GM12878 (cell line): ENCODE measurements at regions of chr2 and their contacts with region 1.

Region 1: DNA sequence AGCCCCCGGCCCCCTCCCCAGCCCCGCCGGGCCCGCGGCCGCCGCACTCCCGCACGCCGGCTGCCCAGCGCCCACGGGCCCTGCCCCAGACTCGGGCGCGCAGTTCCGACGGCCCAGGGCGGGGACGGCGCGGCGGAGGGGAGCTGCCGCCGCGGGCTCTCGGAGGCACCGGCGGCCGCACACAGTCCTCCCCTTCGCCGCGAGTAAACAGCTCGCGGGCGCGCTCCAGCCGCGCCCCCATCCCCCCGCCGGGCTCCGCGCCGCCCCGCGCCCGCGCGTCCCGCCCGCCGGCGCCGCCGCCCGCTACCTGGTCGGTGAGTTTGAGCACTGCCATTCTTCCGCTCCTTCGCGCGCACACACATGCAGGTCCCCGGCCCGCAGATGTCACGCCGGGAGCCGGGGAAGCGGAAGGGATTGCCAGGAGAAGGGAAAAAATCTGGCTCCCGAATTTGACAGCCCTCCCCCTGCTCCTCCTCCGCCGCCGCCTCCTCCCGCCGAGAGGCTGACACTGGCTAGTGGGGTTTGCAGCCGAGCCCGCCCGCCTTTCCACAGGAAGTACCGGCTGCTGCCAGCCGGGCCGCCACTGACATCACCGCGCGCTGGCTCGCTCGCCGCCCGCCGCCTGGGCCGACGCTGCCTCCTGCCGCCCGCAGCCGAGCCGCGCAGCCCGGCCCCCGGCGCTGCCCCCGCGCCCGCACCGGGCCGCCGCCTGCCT is at the start of gene ANKRD44:
- DNase-seq: no peak
- ATAC-seq: peak; percentile 73
- H3K4me3 ChIP-seq: peak within 1 kb of the TSS; percentile 98
- H3K27ac ChIP-seq: peak within 1 kb of the TSS; percentile 99
- H3K4me1 ChIP-seq: peaks cover 21% of the 10 kb centered on the region
- H3K27me3 ChIP-seq: no peaks in the 10 kb centered on the region
- CTCF ChIP-seq: peak; percentile 17 to 64 (median 23); a peak in 3 of 6 replicates
- EP300 ChIP-seq: 0 out of 4 replicates have a peak, but pooled peaks of 1 of the 2 experiments have one; percentile 21
- POLR2A ChIP-seq: peak; percentile 80
- RAD21 ChIP-seq: peak; percentile 55
- polyA plus RNA-seq, gene ANKRD44: 19.1 to 29.1 TPM

Region 2: DNA sequence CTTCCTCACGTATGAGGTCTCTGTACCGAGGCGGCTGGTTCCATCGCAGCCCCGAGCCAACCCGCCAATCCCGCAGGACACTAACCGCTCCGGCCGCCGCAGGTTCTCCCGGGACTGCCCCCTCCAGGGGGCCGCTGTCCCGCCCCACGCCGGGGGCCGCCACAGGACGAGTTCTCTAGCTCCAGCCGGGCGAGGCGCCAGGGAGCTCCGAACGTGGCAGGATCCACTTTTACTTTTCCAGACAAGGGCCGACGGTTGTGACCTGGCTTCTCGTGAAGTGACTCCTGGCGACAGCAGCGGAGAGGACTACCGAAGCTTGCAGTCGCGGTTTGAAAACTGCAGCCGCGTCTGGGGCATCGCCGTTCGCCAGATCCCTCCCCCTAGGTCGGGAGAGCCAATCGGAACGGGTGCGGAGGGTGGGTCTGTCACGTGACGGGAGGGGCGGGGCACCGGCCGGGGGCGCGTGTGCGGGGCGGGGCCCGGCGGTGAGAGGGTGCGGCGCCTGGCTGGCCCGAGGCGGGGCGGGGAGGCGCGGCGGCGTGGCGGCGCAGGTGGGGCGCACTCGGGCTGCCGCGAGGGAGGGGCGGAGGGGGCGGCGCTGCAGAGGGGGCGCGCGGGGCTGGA is 1139.1 kb before region 1 on chr2 and contains the start of gene STK17B:
- CTCF ChIA-PET with region 1: no interaction called
- POLR2A ChIA-PET with region 1: no interaction called
- RAD21 ChIA-PET with region 1: interaction called, 4 read pairs
- SMC1A ChIA-PET with region 1: no interaction called
- in situ Hi-C with region 1: no loop called
- intact Hi-C with region 1: loop called (anchors 10 kb)
- DNase-seq: peak; percentile 82
- ATAC-seq: peak; percentile 64
- H3K4me3 ChIP-seq: peak within 1 kb of the TSS; percentile 98
- H3K27ac ChIP-seq: peak within 1 kb of the TSS; percentile 87
- H3K4me1 ChIP-seq: peaks cover 15% of the 10 kb centered on the region
- H3K27me3 ChIP-seq: no peaks in the 10 kb centered on the region
- CTCF ChIP-seq: no peak
- EP300 ChIP-seq: 0 out of 4 replicates have a peak, but pooled peaks of 1 of the 2 experiments have one; percentile 34
- POLR2A ChIP-seq: peak; percentile 99
- RAD21 ChIP-seq: peak; percentile 16; the same call in 1 of the 2 replicates
- polyA plus RNA-seq, gene STK17B: 21.2 to 28.2 TPM

Region 3: GRCh38 chr2:197152451-197153228 is 157.8 kb before region 1 on chr2:
- CTCF ChIA-PET with region 1: no interaction called
- POLR2A ChIA-PET with region 1: interaction called, 5 read pairs
- RAD21 ChIA-PET with region 1: interaction called, 17 read pairs
- SMC1A ChIA-PET with region 1: interaction called, 3 read pairs
- in situ Hi-C with region 1: no loop called
- intact Hi-C with region 1: no loop called
- DNase-seq: peak; percentile 67
- ATAC-seq: peak; percentile 93
- H3K4me3 ChIP-seq: peak overlapping the region; percentile 25; the same call in 1 of the 2 replicates
- H3K27ac ChIP-seq: peak overlapping the region; percentile 48
- H3K4me1 ChIP-seq: peaks cover 34% of the 10 kb centered on the region
- H3K27me3 ChIP-seq: no peaks in the 10 kb centered on the region
- CTCF ChIP-seq: peak in 2 of 3 experiments; percentile 31 to 39; a peak in 2 of 6 replicates
- EP300 ChIP-seq: peak in 1 of 2 experiments; percentile 44; a peak in 1 of 4 replicates
- POLR2A ChIP-seq: no peak
- RAD21 ChIP-seq: no peak; the same call in 1 of the 2 replicates

Region 4: DNA sequence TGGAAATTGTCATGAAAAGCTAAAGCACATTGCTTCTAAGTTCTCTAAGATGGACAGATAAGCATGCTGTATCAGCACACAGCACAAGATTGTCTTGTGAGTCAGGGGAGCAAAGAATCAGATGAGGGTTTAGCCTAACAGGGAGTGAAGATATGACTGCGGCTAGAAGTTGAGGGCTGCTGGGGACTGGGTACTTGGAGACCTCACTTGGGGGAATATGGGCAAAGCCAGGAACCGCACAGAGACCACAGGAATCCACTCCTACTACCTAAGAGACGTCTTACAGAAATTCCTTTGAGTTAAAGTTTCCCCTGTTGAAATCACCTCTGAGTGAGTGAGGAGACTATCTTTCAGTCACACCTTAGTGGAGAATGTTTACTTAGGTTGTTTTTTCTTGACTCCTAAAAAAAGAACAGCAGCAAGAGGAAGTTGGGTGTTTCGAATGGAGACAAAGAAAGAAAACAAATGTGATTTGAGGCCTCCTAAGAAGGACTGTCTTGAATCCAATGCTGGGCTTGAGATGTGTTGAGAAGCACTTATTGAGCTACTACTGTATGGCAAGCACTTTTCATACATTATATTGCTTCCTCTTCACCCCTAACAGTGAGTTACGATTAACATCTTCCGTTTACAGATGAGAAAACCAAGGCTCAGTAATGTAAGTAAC is 100.6 kb before region 1 on chr2:
- CTCF ChIA-PET with region 1: interaction called, 34 read pairs
- POLR2A ChIA-PET with region 1: interaction called, 80 read pairs
- RAD21 ChIA-PET with region 1: interaction called, 408 read pairs
- SMC1A ChIA-PET with region 1: interaction called, 433 read pairs
- in situ Hi-C with region 1: no loop called
- intact Hi-C with region 1: no loop called
- DNase-seq: peak; percentile 76
- ATAC-seq: peak; percentile 47
- H3K4me3 ChIP-seq: peak overlapping the region; percentile 28
- H3K27ac ChIP-seq: peak overlapping the region; percentile 97
- H3K4me1 ChIP-seq: peaks cover 94% of the 10 kb centered on the region
- H3K27me3 ChIP-seq: no peaks in the 10 kb centered on the region
- CTCF ChIP-seq: no peak
- EP300 ChIP-seq: peak in 1 of 2 experiments; percentile 21; a peak in 2 of 4 replicates
- POLR2A ChIP-seq: no peak
- RAD21 ChIP-seq: no peak

Region 5: DNA sequence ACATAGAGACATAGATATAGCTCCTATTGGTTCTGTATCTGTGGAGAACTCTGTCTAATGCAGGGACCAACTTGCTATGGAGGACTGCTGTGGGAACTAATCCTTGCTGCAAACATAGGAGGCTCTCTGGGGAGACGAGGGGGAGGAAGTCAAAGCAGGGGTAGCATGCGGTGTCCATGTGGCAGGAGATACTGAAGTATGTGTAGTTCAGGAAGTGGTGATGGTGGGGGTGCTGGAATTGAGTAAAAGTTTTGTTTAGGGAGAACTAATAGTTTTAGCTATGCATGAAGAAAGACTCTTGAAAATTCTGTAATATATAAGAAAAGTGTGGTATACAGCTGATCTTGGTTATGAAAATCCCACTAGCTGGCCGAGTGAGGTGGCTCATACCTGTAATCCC is 61.8 kb before region 1 on chr2:
- CTCF ChIA-PET with region 1: interaction called, 3 read pairs
- POLR2A ChIA-PET with region 1: interaction called, 5 read pairs
- RAD21 ChIA-PET with region 1: interaction called, 43 read pairs
- SMC1A ChIA-PET with region 1: interaction called, 165 read pairs
- in situ Hi-C with region 1: no loop called
- intact Hi-C with region 1: no loop called
- DNase-seq: no peak
- ATAC-seq: peak; percentile 45
- H3K4me3 ChIP-seq: no peak overlapping the region
- H3K27ac ChIP-seq: peak overlapping the region; percentile 76
- H3K4me1 ChIP-seq: peaks cover 19% of the 10 kb centered on the region
- H3K27me3 ChIP-seq: no peaks in the 10 kb centered on the region
- CTCF ChIP-seq: no peak
- EP300 ChIP-seq: no peak
- POLR2A ChIP-seq: no peak
- RAD21 ChIP-seq: no peak

Region 6: GRCh38 chr2:197279997-197280746 is 30.3 kb before region 1 on chr2:
- CTCF ChIA-PET with region 1: interaction called, 10 read pairs
- POLR2A ChIA-PET with region 1: interaction called, 10 read pairs
- RAD21 ChIA-PET with region 1: interaction called, 6 read pairs
- SMC1A ChIA-PET with region 1: interaction called, 14 read pairs
- in situ Hi-C with region 1: no loop called
- intact Hi-C with region 1: no loop called
- DNase-seq: no peak
- ATAC-seq: peak; percentile 82
- H3K4me3 ChIP-seq: peak overlapping the region; percentile 33; the same call in 1 of the 2 replicates
- H3K27ac ChIP-seq: peak overlapping the region; percentile 36
- H3K4me1 ChIP-seq: peaks cover 11% of the 10 kb centered on the region
- H3K27me3 ChIP-seq: no peaks in the 10 kb centered on the region
- CTCF ChIP-seq: no peak
- EP300 ChIP-seq: 0 out of 4 replicates have a peak, but pooled peaks of 1 of the 2 experiments have one; percentile 12
- POLR2A ChIP-seq: no peak
- RAD21 ChIP-seq: no peak

Region 7: GRCh38 chr2:197322724-197323720 is 12.6 kb after region 1 on chr2:
- CTCF ChIA-PET with region 1: interaction called, 9 read pairs
- POLR2A ChIA-PET with region 1: interaction called, 3 read pairs
- RAD21 ChIA-PET with region 1: interaction called, 20 read pairs
- SMC1A ChIA-PET with region 1: interaction called, 6 read pairs
- in situ Hi-C with region 1: no loop called
- intact Hi-C with region 1: no loop called
- DNase-seq: no peak
- ATAC-seq: peak; percentile 52
- H3K4me3 ChIP-seq: peak overlapping the region; percentile 32; the same call in 1 of the 2 replicates
- H3K27ac ChIP-seq: 0 out of 2 replicates have a peak overlapping the region, but pooled peaks have one; percentile 7
- H3K4me1 ChIP-seq: peaks cover 18% of the 10 kb centered on the region; the same call in 1 of the 2 replicates
- H3K27me3 ChIP-seq: no peaks in the 10 kb centered on the region
- CTCF ChIP-seq: no peak
- EP300 ChIP-seq: no peak
- POLR2A ChIP-seq: peak; percentile 51
- RAD21 ChIP-seq: no peak

Region 8: DNA sequence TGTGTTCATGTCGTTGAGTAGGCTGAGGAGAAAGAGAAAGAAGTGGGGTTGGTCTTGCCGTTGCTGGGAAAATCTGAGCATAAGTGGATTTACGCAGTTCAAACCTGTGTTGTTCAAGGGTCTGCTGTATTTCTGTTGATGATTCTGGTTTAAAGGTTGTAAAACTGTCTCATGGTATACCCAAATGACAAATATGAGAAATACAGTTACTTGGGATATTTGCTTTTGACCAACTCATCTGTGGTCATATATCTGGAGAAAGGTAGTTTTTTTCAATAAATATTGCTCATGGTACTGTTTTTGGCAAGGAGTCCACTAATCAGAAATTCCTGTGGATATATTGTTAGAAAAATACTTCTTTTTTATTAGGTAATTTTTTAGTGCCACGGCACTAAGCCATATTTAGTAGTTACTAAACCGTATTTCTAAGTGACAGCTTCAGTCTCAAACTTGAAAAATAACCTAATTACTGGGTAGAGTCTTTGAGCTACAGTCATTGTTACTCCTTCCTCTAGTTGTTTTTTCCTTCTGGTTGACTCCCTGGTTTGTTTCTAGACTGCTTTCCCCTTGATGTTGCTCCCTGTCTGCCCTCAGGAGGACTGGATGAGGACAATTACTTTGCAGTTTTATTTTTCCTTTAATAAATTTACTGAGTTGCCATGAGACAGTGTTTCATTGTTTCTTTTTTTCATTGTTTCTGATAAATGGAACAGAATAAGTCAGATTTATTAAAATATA is 236.9 kb after region 1 on chr2:
- CTCF ChIA-PET with region 1: no interaction called
- POLR2A ChIA-PET with region 1: no interaction called
- RAD21 ChIA-PET with region 1: no interaction called
- SMC1A ChIA-PET with region 1: no interaction called
- in situ Hi-C with region 1: no loop called
- intact Hi-C with region 1: no loop called
- DNase-seq: no peak
- ATAC-seq: no peak
- H3K4me3 ChIP-seq: no peak overlapping the region
- H3K27ac ChIP-seq: no peak overlapping the region
- H3K4me1 ChIP-seq: no peaks in the 10 kb centered on the region
- H3K27me3 ChIP-seq: no peaks in the 10 kb centered on the region
- CTCF ChIP-seq: no peak
- EP300 ChIP-seq: no peak
- POLR2A ChIP-seq: no peak
- RAD21 ChIP-seq: no peak

Region 9: DNA sequence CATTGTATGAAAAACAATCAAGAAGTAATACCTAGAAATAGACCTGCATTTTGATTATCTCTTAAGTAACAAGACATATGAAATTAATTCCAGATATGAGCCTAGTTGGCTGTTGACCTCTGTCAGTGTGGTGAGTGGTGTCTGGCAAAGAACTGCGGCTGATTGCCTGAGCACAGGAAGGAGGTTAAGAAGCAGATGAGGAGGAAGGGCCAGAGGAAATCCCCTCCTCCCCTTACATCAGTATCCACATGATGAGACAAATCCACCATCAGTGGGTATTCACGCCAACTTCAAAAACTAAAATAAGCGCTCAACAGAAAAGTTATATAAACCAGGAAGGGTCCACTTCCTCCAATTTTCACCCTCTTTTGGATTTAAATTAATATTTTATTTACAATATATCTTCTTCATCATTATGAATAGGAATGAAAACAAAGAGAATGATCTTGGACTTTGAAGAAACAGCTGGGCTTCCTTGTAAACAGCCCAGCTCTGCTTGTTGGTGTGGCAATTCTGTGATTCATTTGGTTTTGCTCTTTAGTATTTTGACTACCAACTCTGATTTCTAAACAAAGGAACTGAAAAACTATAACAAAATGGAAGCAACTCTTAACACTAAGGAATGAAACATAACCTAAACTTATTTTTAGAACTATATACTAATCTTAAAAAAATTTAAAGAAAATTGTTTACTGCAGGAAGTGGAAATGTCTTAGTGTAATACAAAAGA is 337.7 kb after region 1 on chr2:
- CTCF ChIA-PET with region 1: no interaction called
- POLR2A ChIA-PET with region 1: no interaction called
- RAD21 ChIA-PET with region 1: no interaction called
- SMC1A ChIA-PET with region 1: no interaction called
- in situ Hi-C with region 1: no loop called
- intact Hi-C with region 1: no loop called
- DNase-seq: no peak
- ATAC-seq: peak; percentile 97
- H3K4me3 ChIP-seq: no peak overlapping the region
- H3K27ac ChIP-seq: no peak overlapping the region
- H3K4me1 ChIP-seq: no peaks in the 10 kb centered on the region
- H3K27me3 ChIP-seq: no peaks in the 10 kb centered on the region
- CTCF ChIP-seq: no peak
- EP300 ChIP-seq: no peak
- POLR2A ChIP-seq: no peak
- RAD21 ChIP-seq: no peak